Naive thymus-derived CD8-positive, alpha-beta T cell (primary cell): ENCODE measurements at regions of chr3 and their contacts with region 1.

Region 1: GRCh38 chr3:156674046-156674910 is at the start of gene TIPARP:
- DNase-seq: peak; percentile 97 to 99 (median 99)
- ATAC-seq: peak; percentile 76 to 80
- H3K4me3 Mint-ChIP-seq: peak within 1 kb of the TSS; percentile 89 to 99 (median 97)
- H3K27ac Mint-ChIP-seq: peak within 1 kb of the TSS; percentile 92 to 99 (median 99)
- H3K4me1 Mint-ChIP-seq: peaks cover 22 to 47% (median 41%) of the 10 kb centered on the region in 4 donors
- H3K27me3 Mint-ChIP-seq: no peaks in the 10 kb centered on the region
- polyA plus RNA-seq, gene TIPARP: 4.2 to 20.9 (median 7.0) TPM

Region 2: GRCh38 chr3:156554842-156555687 is 119.2 kb before region 1 on chr3 and contains the start of gene SSR3:
- POLR2A ChIA-PET with region 1: interaction called, 47 read pairs
- DNase-seq: peak; percentile 92 to 99 (median 98)
- ATAC-seq: peak; percentile 98
- H3K4me3 Mint-ChIP-seq: peak within 1 kb of the TSS; percentile 92 to 99 (median 96)
- H3K27ac Mint-ChIP-seq: peak within 1 kb of the TSS; percentile 88 to 98 (median 96)
- H3K4me1 Mint-ChIP-seq: peaks cover 22 to 56% (median 42%) of the 10 kb centered on the region in 4 donors
- H3K27me3 Mint-ChIP-seq: peaks cover 0 to 1% (median 0%) of the 10 kb centered on the region in 5 donors
- polyA plus RNA-seq, gene SSR3: 81.7 to 93.9 (median 86.3) TPM

Region 3: DNA sequence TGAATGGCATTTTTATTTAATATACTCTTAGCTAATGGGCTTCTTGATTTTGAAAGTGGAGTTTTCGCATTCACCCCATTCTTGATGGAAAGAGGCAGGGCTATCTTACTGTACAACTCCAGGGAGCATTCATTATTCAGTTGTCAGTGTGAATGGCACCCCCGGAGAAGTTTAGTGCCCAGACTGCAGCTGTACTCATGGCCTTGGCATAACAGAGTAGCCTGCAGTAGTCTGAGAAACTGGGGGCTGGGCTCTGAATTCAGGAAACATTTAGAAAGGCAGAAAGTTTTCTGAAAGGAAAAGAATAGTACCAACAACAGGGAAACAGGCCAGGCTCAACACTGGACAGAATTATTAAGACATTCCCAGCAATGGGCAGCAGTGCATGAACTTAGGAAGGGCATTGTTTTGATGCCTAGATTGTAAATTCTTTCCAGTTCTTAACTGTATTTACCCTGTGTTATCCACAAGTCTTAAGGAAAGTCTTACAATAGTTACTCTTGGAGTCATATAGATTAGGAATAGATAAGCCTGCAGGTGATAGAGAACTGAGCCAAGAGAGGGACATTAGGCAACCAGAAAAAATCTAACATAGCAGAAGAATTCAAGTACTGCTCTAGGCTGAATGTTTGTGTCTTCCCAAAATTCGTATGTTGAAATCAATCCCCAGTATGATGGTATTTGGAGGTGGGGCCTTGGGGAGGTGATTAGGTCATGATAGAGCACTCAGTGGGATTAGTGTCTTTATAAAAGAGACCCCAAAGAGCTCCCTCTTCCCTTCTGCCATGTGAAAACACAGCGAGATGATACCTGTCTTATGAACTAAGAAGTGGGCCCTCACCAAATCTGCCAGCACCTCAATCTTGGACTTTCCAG is 44.6 kb after region 1 on chr3:
- POLR2A ChIA-PET with region 1: no interaction called
- DNase-seq: no peak
- ATAC-seq: no peak
- H3K4me3 Mint-ChIP-seq: no peak overlapping the region
- H3K27ac Mint-ChIP-seq: no peak overlapping the region
- H3K4me1 Mint-ChIP-seq: no peaks in the 10 kb centered on the region
- H3K27me3 Mint-ChIP-seq: no peaks in the 10 kb centered on the region

Region 4: GRCh38 chr3:156816800-156817645 is 142.7 kb after region 1 on chr3:
- POLR2A ChIA-PET with region 1: interaction called, 34 read pairs
- DNase-seq: peak; percentile 70 to 90 (median 80)
- ATAC-seq: peak; percentile 83 to 87
- H3K4me3 Mint-ChIP-seq: peak overlapping the region; percentile 90 to 97 (median 95)
- H3K27ac Mint-ChIP-seq: peak overlapping the region; percentile 89 to 98 (median 96)
- H3K4me1 Mint-ChIP-seq: peaks cover 15 to 35% (median 26%) of the 10 kb centered on the region in 4 donors
- H3K27me3 Mint-ChIP-seq: no peaks in the 10 kb centered on the region

Region 5: GRCh38 chr3:157088601-157089454 is 414.6 kb after region 1 on chr3:
- POLR2A ChIA-PET with region 1: interaction called, 19 read pairs
- DNase-seq: peak; percentile 85 to 96 (median 94)
- ATAC-seq: peak; percentile 91 to 96
- H3K4me3 Mint-ChIP-seq: peak overlapping the region; percentile 82 to 92 (median 87)
- H3K27ac Mint-ChIP-seq: peak overlapping the region; percentile 90 to 99 (median 96)
- H3K4me1 Mint-ChIP-seq: peaks cover 18 to 32% (median 20%) of the 10 kb centered on the region in 4 donors
- H3K27me3 Mint-ChIP-seq: peaks cover 0 to 2% (median 0%) of the 10 kb centered on the region in 5 donors

Region 6: DNA sequence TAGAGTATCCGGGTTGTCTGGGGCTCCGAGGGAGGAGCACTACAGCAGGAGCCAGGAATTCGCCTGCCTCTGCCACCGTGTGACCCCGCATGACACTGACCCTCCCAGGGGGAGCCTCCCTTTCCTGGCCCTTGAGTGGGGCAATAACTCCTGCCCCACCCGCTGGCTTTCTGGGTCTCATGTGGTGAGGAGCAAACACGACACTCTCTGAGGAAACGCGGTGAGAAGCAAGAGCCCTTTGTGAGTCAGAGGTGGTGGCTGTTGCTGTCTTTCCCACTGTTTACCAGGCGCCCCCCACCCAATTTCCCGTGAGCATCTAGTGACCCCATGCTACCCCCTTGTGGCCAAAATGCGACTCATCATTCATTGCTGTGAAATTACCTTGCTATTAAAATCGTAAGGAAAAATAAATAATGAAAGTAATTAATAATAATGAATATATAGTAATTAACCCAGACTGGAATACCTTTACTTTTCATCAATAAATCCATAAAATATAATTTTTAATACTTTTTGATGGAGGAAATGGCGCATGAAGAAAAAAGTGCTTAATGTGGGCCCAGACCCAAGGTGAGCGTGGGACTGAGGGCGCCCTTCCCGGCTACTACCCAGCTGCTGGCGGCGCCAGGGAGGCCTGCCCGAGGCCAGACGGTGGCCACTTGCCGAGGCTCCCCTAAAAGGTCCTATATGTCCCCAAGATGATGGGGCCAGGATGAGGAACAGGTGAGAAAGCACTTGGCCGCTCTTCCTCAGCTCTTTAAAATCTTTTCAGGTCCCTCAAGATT is 456.4 kb after region 1 on chr3:
- POLR2A ChIA-PET with region 1: interaction called, 16 read pairs
- DNase-seq: peak; percentile 54 to 92 (median 78)
- ATAC-seq: peak; percentile 64 to 74
- H3K4me3 Mint-ChIP-seq: peak overlapping the region; percentile 57 to 84 (median 72)
- H3K27ac Mint-ChIP-seq: peak overlapping the region; percentile 93 to 98 (median 98)
- H3K4me1 Mint-ChIP-seq: peaks cover 39 to 70% (median 66%) of the 10 kb centered on the region in 4 donors
- H3K27me3 Mint-ChIP-seq: no peaks in the 10 kb centered on the region

Region 7: GRCh38 chr3:157174649-157175498 is 500.6 kb after region 1 on chr3:
- POLR2A ChIA-PET with region 1: interaction called, 11 read pairs
- DNase-seq: peak; percentile 91 to 99 (median 98)
- ATAC-seq: peak; percentile 91 to 93
- H3K4me3 Mint-ChIP-seq: peak overlapping the region; percentile 81 to 98 (median 94)
- H3K27ac Mint-ChIP-seq: peak overlapping the region; percentile 95 to 99 (median 98)
- H3K4me1 Mint-ChIP-seq: peaks cover 12 to 44% (median 33%) of the 10 kb centered on the region in 4 donors
- H3K27me3 Mint-ChIP-seq: peaks cover 0 to 3% (median 0%) of the 10 kb centered on the region in 5 donors